Naive thymus-derived CD4-positive, alpha-beta T cell (primary cell): ENCODE measurements at regions of chr1 and their contacts with region 1.

Region 1: GRCh38 chr1:151156515-151156819 is at the start of gene TNFAIP8L2:
- DNase-seq: peak in 7 of 9 donors; percentile 50 to 75 (median 66)
- ATAC-seq: peak; percentile 90
- H3K4me3 ChIP-seq: peak within 1 kb of the TSS; percentile 98
- H3K4me3 Mint-ChIP-seq: peak within 1 kb of the TSS; percentile 93 to 100 (median 99)
- H3K27ac ChIP-seq: peak within 1 kb of the TSS; percentile 78
- H3K27ac Mint-ChIP-seq: peak within 1 kb of the TSS; percentile 88 to 97 (median 95)
- H3K4me1 ChIP-seq: peaks cover 23 to 27% of the 10 kb centered on the region in 2 donors
- H3K4me1 Mint-ChIP-seq: peaks cover 34 to 61% (median 46%) of the 10 kb centered on the region in 7 donors
- H3K27me3 ChIP-seq: no peaks in the 10 kb centered on the region
- H3K27me3 Mint-ChIP-seq: no peaks in the 10 kb centered on the region
- total RNA-seq, gene TNFAIP8L2: 3.1 to 59.4 (median 37.6) TPM

Region 2: DNA sequence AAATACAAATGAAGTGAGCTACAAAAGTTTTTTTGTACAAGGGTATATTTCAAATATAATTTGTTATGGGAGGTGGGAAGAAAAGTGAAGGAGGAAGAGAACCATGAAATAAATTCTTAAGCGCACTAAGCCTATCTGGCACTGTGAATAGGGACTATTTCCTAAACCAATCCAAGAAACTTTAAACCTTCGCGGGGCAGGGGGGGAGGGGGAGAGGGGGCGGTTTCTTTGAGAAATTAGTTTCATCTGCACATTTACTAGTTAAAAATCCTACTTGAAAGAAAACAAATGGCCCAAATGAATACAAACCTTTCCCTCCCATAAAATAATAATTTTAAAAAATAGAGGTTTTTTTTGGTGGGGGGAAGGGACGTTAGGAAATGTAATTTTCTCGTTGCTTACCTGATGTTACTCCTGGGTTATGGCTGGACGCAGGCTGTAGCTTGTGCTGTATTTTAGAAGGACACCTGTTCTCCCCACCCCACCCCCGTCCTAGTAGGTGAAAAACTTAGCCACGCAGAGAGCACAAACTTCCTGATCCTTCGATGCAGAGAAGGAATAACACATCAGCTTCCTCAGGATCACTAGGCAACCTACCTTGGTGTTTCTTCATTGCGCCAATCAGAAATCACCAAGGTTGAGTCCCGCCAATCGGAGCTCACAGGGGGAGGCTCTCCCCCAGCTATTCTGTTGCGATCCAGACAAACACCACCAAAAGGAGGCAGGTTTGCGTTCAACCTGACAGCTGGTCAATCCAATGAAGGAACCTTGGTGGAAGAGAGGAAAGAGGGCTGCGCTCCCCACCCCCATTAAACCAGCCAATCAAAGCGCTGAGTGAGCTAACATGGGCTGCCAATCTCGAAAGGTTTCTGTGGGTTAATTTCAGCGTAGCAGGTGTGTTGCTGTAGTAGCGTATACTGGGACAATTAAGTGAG is 459.6 kb before region 1 on chr1 and contains the start of gene GOLPH3L:
- CTCF ChIA-PET with region 1: no interaction called
- POLR2A ChIA-PET with region 1: interaction called, 3 read pairs
- intact Hi-C with region 1: loop called in 1 of 2 experiments (anchors 5 kb)
- DNase-seq: peak; percentile 46 to 95 (median 92)
- ATAC-seq: peak; percentile 100
- H3K4me3 ChIP-seq: peak within 1 kb of the TSS; percentile 73
- H3K4me3 Mint-ChIP-seq: peak within 1 kb of the TSS; percentile 91 to 100 (median 98)
- H3K27ac ChIP-seq: peak within 1 kb of the TSS; percentile 82
- H3K27ac Mint-ChIP-seq: peak within 1 kb of the TSS; percentile 81 to 99 (median 95)
- H3K4me1 ChIP-seq: peaks cover 4 to 11% of the 10 kb centered on the region in 2 donors
- H3K4me1 Mint-ChIP-seq: peaks cover 13 to 49% (median 42%) of the 10 kb centered on the region in 7 donors
- H3K27me3 ChIP-seq: no peaks in the 10 kb centered on the region
- H3K27me3 Mint-ChIP-seq: peaks cover 0 to 12% (median 0%) of the 10 kb centered on the region in 5 donors
- total RNA-seq, gene GOLPH3L: 8.7 to 32.1 (median 23.6) TPM

Region 3: DNA sequence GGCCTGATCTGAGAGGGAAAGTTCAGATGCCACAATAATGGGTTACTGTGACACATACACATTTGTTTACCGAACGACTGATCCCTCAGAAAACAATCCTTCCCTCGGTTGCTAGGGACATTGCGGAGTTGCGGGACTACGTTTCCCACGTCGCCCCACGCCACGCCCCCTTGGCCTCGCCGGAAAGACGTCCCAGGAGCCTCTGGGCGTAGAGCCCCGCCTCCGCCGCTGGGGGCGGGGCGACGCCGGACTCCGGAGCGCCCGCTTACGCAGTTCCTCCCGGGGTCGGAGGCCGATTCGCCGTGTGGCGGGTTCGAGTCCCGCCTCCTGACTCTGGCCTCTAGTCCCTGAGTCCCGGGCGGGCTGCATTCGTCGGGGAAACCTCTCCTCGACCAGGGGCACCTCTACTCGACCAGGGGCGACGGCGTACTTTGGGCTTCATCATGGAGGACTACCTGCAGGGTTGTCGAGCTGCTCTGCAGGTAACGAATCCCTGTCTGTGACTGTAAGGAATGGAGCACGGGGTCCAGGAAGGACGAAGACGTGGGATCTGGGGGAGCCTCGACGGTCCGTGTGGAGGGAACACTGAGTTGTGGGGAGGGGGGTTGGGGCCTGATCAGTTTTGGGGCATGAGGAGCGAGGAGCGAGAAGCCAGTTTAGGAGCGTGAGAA is 148.1 kb before region 1 on chr1 and contains the start of gene PRUNE1:
- CTCF ChIA-PET with region 1: interaction called, 3 read pairs
- POLR2A ChIA-PET with region 1: interaction called, 12 read pairs
- intact Hi-C with region 1: loop called in 1 of 2 experiments (anchors 5 kb)
- DNase-seq: peak; percentile 87 to 98 (median 92)
- ATAC-seq: peak; percentile 96
- H3K4me3 ChIP-seq: peak within 1 kb of the TSS; percentile 88
- H3K4me3 Mint-ChIP-seq: peak within 1 kb of the TSS; percentile 91 to 100 (median 97)
- H3K27ac ChIP-seq: peak within 1 kb of the TSS; percentile 96
- H3K27ac Mint-ChIP-seq: peak within 1 kb of the TSS; percentile 92 to 99 (median 97)
- H3K4me1 ChIP-seq: peaks cover 32 to 45% of the 10 kb centered on the region in 2 donors
- H3K4me1 Mint-ChIP-seq: peaks cover 46 to 84% (median 70%) of the 10 kb centered on the region in 7 donors
- H3K27me3 ChIP-seq: no peaks in the 10 kb centered on the region
- H3K27me3 Mint-ChIP-seq: no peaks in the 10 kb centered on the region
- total RNA-seq, gene PRUNE1: 13.3 to 41.8 (median 17.2) TPM

Region 4: DNA sequence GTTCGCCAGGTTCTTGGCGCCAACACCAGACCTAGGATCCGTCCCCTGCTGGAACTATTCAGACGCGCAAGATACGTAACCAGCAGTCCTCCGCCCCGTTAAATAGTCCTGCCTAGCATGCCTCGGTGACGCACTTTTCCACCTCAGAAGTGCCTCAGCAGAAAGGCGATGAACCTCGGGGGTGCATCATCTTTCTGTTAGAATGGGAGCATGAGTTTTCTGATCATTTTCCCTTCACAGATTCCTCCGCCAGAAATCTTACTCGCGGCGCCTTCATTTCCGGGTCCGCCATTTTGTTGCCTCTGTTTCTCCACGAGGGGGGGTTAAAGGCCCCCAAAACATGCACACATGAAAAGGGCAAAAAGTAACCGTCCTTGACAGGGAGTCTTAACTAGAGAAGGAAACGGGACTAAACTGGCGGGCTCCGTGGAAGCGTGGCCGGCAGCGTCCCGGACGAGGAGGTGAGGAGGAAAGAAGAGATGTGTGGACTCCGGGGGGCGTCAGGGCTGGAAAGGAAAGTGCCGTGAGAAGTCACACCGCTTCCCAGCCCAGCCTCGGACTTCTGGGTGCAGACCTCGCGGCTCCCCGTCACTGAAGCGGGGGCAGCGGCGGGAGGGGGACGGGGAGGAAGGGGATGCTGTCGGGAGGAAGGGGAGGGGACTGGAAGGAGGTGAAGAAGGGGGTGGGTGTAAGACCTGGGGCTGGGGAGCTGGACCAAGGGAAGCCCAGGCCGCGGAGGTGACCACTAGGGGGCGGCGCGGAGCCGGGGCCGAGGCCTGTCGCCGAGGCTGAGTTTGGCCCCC is 85.8 kb before region 1 on chr1 and contains the start of gene GABPB2:
- CTCF ChIA-PET with region 1: interaction called, 6 read pairs
- POLR2A ChIA-PET with region 1: interaction called, 5 read pairs
- intact Hi-C with region 1: loop called (anchors 1 kb)
- DNase-seq: peak; percentile 78 to 94 (median 89)
- ATAC-seq: peak; percentile 91
- H3K4me3 ChIP-seq: peak within 1 kb of the TSS; percentile 99
- H3K4me3 Mint-ChIP-seq: peak within 1 kb of the TSS; percentile 94 to 100 (median 99)
- H3K27ac ChIP-seq: peak within 1 kb of the TSS; percentile 94
- H3K27ac Mint-ChIP-seq: peak within 1 kb of the TSS; percentile 97 to 100 (median 100)
- H3K4me1 ChIP-seq: peaks cover 8 to 9% of the 10 kb centered on the region in 2 donors
- H3K4me1 Mint-ChIP-seq: peaks cover 5 to 37% (median 29%) of the 10 kb centered on the region in 7 donors
- H3K27me3 ChIP-seq: no peaks in the 10 kb centered on the region
- H3K27me3 Mint-ChIP-seq: peaks cover 0 to 2% (median 0%) of the 10 kb centered on the region in 5 donors
- total RNA-seq, gene GABPB2: 13.7 to 42.2 (median 32.2) TPM

Region 5: GRCh38 chr1:151130987-151131586 is 25.4 kb before region 1 on chr1:
- CTCF ChIA-PET with region 1: interaction called, 16 read pairs
- POLR2A ChIA-PET with region 1: interaction called, 19 read pairs
- intact Hi-C with region 1: loop called in 1 of 2 experiments (anchors 1 kb)
- DNase-seq: peak; percentile 37 to 92 (median 86)
- ATAC-seq: peak; percentile 99
- H3K4me3 ChIP-seq: peak overlapping the region; percentile 49
- H3K4me3 Mint-ChIP-seq: peak overlapping the region; percentile 70 to 88 (median 83)
- H3K27ac ChIP-seq: peak overlapping the region; percentile 58
- H3K27ac Mint-ChIP-seq: peak overlapping the region; percentile 13 to 94 (median 84)
- H3K4me1 ChIP-seq: peaks cover 0 to 4% of the 10 kb centered on the region in 2 donors
- H3K4me1 Mint-ChIP-seq: peaks cover 4 to 15% (median 11%) of the 10 kb centered on the region in 7 donors
- H3K27me3 ChIP-seq: no peaks in the 10 kb centered on the region
- H3K27me3 Mint-ChIP-seq: peaks cover 0 to 12% (median 0%) of the 10 kb centered on the region in 5 donors

Region 6: GRCh38 chr1:151198255-151199127 is 42.0 kb after region 1 on chr1 and contains the start of gene PIP5K1A:
- CTCF ChIA-PET with region 1: no interaction called
- POLR2A ChIA-PET with region 1: interaction called, 4 read pairs
- intact Hi-C with region 1: loop called in 1 of 2 experiments (anchors 2 kb)
- DNase-seq: peak; percentile 96 to 99 (median 97)
- ATAC-seq: peak; percentile 98
- H3K4me3 ChIP-seq: peak within 1 kb of the TSS; percentile 83
- H3K4me3 Mint-ChIP-seq: peak within 1 kb of the TSS; percentile 93 to 100 (median 98)
- H3K27ac ChIP-seq: peak within 1 kb of the TSS; percentile 88
- H3K27ac Mint-ChIP-seq: peak within 1 kb of the TSS; percentile 95 to 99 (median 98)
- H3K4me1 ChIP-seq: peaks cover 11% of the 10 kb centered on the region in 2 donors
- H3K4me1 Mint-ChIP-seq: peaks cover 31 to 56% (median 46%) of the 10 kb centered on the region in 7 donors
- H3K27me3 ChIP-seq: no peaks in the 10 kb centered on the region
- H3K27me3 Mint-ChIP-seq: peaks cover 0 to 12% (median 0%) of the 10 kb centered on the region in 5 donors
- total RNA-seq, gene PIP5K1A: 56.9 to 76.5 (median 59.5) TPM

Region 7: GRCh38 chr1:151828965-151829698 is 672.7 kb after region 1 on chr1:
- CTCF ChIA-PET with region 1: no interaction called
- POLR2A ChIA-PET with region 1: no interaction called
- intact Hi-C with region 1: no loop called
- DNase-seq: no peak
- ATAC-seq: no peak
- H3K4me3 ChIP-seq: no peak overlapping the region
- H3K4me3 Mint-ChIP-seq: peak overlapping the region; percentile 39 to 80 (median 72)
- H3K27ac ChIP-seq: peak overlapping the region; percentile 16
- H3K27ac Mint-ChIP-seq: peak overlapping the region; percentile 3 to 91 (median 80)
- H3K4me1 ChIP-seq: peaks cover 49 to 60% of the 10 kb centered on the region in 2 donors
- H3K4me1 Mint-ChIP-seq: peaks cover 41 to 81% (median 59%) of the 10 kb centered on the region in 7 donors
- H3K27me3 ChIP-seq: no peaks in the 10 kb centered on the region
- H3K27me3 Mint-ChIP-seq: no peaks in the 10 kb centered on the region